ENCODE measurements at regions of chr5 and their contacts with region 1.

Region 1: DNA sequence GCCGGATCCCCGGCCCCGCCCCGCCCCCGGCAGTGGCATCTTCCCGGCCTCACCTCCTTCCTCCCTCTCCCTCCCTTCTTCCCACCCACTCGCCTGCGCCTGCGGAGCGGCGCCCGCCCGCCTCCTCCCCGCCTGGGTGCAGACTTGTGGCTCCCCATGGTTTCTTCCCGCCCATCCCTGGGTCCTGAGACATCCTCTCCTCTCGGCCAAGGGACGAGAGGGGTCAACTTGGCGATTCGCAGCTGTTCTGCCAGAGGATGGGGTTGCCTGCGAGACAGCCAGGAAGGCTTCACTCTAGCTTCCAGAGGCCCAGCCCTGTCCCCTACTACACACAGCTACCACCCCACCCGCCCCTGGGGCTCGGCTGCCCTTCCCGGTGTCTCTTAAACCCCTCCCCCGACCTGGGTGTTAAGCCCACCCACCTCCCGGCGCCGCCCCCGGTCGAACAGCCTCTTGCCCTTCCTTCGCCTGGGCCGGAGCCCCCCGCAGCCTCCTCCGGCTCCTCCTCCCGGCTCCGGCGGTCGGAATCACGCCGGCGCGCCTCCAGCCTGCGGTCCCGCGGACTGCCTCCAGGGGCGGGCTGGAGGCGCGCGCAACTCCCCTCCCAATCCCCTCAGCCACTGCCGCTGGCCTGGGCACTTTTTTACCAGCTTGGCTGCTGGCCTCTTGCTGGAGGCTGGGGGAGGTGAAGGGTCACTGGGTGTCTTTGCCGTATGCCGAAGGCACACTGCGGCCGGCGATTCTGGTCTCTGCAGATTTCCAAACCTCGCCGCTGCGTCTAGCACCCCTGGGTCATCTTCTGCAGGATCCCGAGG is 1.9 kb downstream of the JADE2 start:
- DNase-seq: peak; percentile 86
- ATAC-seq: peak; percentile 49
- H3K4me3 Mint-ChIP-seq: peak overlapping the region; percentile 97
- H3K27ac Mint-ChIP-seq: peak overlapping the region; percentile 94
- H3K4me1 Mint-ChIP-seq: peaks cover 38% of the 10 kb centered on the region
- H3K27me3 Mint-ChIP-seq: no peaks in the 10 kb centered on the region

Region 2: DNA sequence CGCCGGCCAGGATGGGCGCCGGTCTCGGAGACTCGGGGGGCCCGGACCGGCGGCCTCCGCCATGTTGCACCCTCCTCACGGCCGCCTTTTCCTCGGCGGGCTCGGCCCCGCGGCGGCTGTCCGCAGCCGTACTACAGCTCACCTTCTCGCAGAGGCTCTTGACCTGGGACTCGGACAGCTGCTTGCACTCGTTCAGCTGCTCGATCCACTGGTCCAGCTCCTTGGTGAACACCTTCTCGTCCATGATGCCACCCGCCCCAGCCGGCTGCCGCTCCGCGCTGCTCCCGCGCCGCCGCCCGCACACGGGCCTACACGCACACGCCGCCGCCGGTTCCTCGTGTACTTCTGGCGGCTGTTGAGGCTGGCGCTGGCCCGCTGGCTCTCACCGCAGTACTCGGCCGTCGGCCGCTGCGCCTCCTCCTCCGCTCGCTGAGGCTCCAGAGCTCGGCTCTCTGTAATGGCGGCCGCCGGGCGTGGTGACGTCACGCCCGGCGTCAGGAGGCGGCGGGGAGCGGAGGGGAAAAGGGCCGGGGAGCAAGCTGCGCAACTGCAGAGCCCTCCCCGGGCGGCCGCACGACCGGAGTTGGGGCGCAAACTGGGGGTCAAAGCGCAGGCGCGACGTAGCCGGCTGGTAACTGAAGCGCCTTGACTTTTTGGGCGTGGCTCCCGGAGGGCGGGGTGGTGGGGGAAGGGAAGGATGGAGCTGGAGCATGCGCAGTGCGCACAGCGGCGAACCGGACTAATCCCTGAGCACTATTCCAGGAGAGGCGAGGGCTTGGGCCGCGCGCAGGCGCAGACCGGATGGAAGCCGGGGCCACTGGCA is 301.5 kb before region 1 on chr5 and contains the start of gene PPP2CA:
- POLR2A ChIA-PET with region 1: interaction called, 10 read pairs
- DNase-seq: peak; percentile 99
- ATAC-seq: peak; percentile 88
- H3K4me3 Mint-ChIP-seq: peak within 1 kb of the TSS; percentile 67
- H3K27ac Mint-ChIP-seq: peak within 1 kb of the TSS; percentile 98
- H3K4me1 Mint-ChIP-seq: peaks cover 35% of the 10 kb centered on the region
- H3K27me3 Mint-ChIP-seq: no peaks in the 10 kb centered on the region
- total RNA-seq, gene PPP2CA: 122 to 129 TPM

Region 3: GRCh38 chr5:134411546-134412266 is 115.6 kb before region 1 on chr5 and contains the start of gene CDKN2AIPNL:
- POLR2A ChIA-PET with region 1: interaction called, 67 read pairs
- DNase-seq: peak; percentile 92
- ATAC-seq: peak; percentile 100
- H3K4me3 Mint-ChIP-seq: peak within 1 kb of the TSS; percentile 93
- H3K27ac Mint-ChIP-seq: peak within 1 kb of the TSS; percentile 88
- H3K4me1 Mint-ChIP-seq: peaks cover 26% of the 10 kb centered on the region
- H3K27me3 Mint-ChIP-seq: no peaks in the 10 kb centered on the region
- total RNA-seq, gene CDKN2AIPNL: 22.3 to 23.4 TPM

Region 4: DNA sequence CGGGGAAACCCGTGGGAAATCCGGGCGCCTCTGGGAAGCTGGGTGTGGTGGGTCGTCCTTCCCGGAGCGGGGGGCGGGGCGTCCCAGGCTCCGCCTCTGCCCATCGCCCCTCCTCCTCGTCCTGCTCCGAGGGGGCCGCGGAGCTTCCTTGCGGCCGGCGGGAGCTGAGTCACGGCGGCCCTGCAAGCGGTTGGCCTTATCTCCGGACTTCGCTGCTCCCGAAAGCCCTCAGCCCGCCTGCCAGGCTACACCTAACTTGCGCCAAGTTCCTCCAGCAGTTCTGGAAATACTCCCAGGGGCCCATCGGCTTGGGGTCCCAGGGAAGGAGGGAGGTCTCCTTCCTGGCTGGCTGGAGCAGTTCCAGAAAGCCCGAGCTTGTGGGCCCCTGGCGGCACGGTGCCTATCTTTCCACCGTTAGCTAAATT is 61.5 kb before region 1 on chr5:
- POLR2A ChIA-PET with region 1: interaction called, 51 read pairs
- DNase-seq: peak; percentile 80
- ATAC-seq: peak; percentile 77
- H3K4me3 Mint-ChIP-seq: peak overlapping the region; percentile 82
- H3K27ac Mint-ChIP-seq: peak overlapping the region; percentile 83
- H3K4me1 Mint-ChIP-seq: peaks cover 10% of the 10 kb centered on the region
- H3K27me3 Mint-ChIP-seq: peaks cover 1% of the 10 kb centered on the region

Region 5: GRCh38 chr5:134511788-134512650 is 15.3 kb before region 1 on chr5:
- POLR2A ChIA-PET with region 1: interaction called, 18 read pairs
- DNase-seq: no peak
- ATAC-seq: no peak
- H3K4me3 Mint-ChIP-seq: no peak overlapping the region
- H3K27ac Mint-ChIP-seq: no peak overlapping the region
- H3K4me1 Mint-ChIP-seq: peaks cover 12% of the 10 kb centered on the region
- H3K27me3 Mint-ChIP-seq: no peaks in the 10 kb centered on the region

Measured in activated naive CD8-positive, alpha-beta T cell treated with anti-CD3 and anti-CD28 coated beads, Interleukin-2, amount 10 ng/mL, durations not matched to agents 7 days and 5 days (primary cell).